Colonic mucosa (tissue), 4 donors: ENCODE measurements at regions of chr11 and their contacts with region 1.

Region 1: DNA sequence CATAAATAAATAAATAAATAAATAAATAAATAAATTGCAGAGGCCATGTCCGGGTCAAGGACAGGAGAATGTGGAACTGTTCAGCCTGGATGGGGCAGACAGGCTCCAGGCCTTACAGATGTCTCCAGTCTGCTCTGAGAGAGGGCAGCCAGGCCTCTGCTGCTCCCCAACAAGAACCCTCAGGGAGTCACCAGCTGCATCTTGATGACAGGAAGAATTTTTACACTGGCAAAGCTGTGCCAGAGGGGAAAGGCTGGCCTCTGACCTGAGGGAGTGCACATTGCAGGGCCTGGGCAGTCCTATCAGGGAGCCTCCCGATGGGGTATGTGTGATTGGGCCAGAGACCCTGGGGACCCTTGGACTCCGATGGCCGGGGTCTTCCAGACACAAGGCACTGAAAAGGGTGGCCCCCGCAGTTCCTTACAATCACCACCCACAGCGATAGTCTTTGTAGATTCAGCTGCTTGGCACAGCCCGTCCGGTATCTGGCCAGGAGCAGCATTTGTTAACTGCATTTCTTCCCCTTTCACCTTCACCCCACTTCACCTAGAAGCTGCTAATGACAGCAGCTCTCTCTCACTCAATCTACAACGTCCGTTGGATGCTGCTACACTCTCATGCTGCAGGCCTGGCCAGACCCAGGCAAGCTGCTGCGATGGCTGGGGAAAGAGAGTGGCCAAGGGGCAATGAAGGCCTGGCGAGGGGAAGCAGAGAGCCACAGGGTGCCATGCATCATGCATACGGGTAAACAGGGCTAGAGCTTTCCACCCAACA is 8.1 kb downstream of the MOGAT2 start:
- DNase-seq: no peak
- H3K4me3 ChIP-seq: no peak overlapping the region
- H3K27ac ChIP-seq: no peak overlapping the region
- H3K4me1 ChIP-seq: peaks cover 8% of the 10 kb centered on the region
- H3K27me3 ChIP-seq: no peaks in the 10 kb centered on the region
- CTCF ChIP-seq: no peak

Region 2: DNA sequence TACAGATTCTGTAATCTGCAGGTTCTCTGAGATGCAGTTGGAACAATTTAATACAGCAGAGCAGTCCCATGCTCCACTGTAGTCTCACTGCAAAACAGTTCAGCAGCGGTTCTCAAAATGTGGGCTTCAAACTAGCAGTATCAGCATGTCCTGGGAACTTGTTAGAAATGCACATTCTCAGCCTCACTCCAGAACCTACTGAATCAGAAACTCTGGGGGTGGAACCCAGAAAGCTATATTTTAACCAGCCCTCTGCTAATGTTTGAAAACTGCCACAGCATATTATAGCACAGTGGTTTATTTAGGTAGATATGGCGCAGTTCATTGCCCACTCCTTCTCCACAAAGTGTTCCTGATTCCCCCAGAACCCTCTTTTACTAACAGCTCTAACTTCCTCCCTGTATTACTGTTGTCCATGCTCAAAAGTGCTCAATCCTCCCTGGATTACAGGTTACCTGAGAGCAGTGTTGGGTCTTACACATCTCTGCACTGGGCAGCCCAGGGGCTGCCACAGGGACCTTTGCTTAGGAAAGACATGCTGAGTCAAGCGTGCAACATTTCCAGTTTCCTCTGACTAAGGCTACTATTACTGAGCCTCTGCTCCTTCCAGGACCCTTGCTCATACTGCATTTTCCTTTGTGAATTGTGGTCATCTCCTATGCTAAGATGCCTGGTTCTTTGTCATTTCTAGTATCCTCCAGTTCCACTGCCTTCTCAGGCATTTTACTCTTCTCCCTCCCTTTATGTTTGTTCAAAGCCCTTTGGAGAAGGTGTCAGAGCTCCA is 35.2 kb after region 1 on chr11:
- intact Hi-C with region 1: loop called (anchors 5 kb)
- DNase-seq: no peak
- H3K4me3 ChIP-seq: no peak overlapping the region
- H3K27ac ChIP-seq: no peak overlapping the region
- H3K4me1 ChIP-seq: no peaks in the 10 kb centered on the region
- H3K27me3 ChIP-seq: no peaks in the 10 kb centered on the region
- CTCF ChIP-seq: no peak